CD4-positive, alpha-beta memory T cell (primary cell): ENCODE measurements at regions of chr12 and their contacts with region 1.

Region 1: GRCh38 chr12:132828706-132829534 is at the start of gene GOLGA3:
- DNase-seq: peak; percentile 93 to 96 (median 95)
- H3K4me3 ChIP-seq: peak within 1 kb of the TSS; percentile 58 to 91
- H3K4me3 Mint-ChIP-seq: peak within 1 kb of the TSS; percentile 91 to 99 (median 96)
- H3K27ac ChIP-seq: peak within 1 kb of the TSS; percentile 98
- H3K27ac Mint-ChIP-seq: peak within 1 kb of the TSS; percentile 99 to 100 (median 100)
- H3K4me1 ChIP-seq: peaks cover 30% of the 10 kb centered on the region
- H3K4me1 Mint-ChIP-seq: peaks cover 22 to 63% (median 43%) of the 10 kb centered on the region in 4 donors
- H3K27me3 ChIP-seq: no peaks in the 10 kb centered on the region
- H3K27me3 Mint-ChIP-seq: no peaks in the 10 kb centered on the region
- total RNA-seq, gene GOLGA3: 64.1 to 67.6 TPM

Region 2: GRCh38 chr12:132710422-132711168 is 118.3 kb before region 1 on chr12 and contains the start of gene PGAM5:
- CTCF ChIA-PET with region 1: no interaction called
- POLR2A ChIA-PET with region 1: interaction called, 7 read pairs
- intact Hi-C with region 1: loop called (anchors 2 kb)
- DNase-seq: peak; percentile 95 to 97 (median 96)
- H3K4me3 ChIP-seq: peak within 1 kb of the TSS; percentile 48 to 70
- H3K4me3 Mint-ChIP-seq: peak within 1 kb of the TSS; percentile 88 to 90 (median 90)
- H3K27ac ChIP-seq: peak within 1 kb of the TSS; percentile 91
- H3K27ac Mint-ChIP-seq: peak within 1 kb of the TSS; percentile 92 to 95 (median 94)
- H3K4me1 ChIP-seq: peaks cover 28% of the 10 kb centered on the region
- H3K4me1 Mint-ChIP-seq: peaks cover 8 to 33% (median 19%) of the 10 kb centered on the region in 4 donors
- H3K27me3 ChIP-seq: no peaks in the 10 kb centered on the region
- H3K27me3 Mint-ChIP-seq: no peaks in the 10 kb centered on the region
- total RNA-seq, gene PGAM5: 23.8 to 28.1 TPM

Region 3: DNA sequence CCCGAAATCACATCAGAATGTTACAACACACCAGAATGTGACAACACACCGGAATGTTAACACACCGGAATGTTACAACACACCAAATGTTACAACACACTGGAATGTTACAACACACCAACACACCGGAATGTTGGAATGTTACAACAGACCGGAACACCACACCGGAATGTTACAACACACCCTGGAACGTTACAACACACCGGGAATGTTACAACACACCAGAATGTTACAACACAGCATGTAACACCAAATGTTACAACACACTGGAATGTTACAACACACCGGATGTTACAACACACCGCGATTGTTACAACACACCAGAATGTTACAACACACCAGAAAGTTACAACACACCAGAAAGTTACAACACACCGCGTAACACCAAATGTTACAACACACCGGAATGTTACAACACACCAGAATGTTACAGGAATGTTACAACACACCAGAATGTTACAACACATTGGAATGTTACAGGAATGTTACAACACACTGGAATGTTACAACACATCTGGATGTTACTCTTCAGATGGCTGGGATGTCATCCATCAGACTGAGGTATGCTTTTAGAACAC is 37.4 kb after region 1 on chr12:
- CTCF ChIA-PET with region 1: no interaction called
- POLR2A ChIA-PET with region 1: interaction called, 3 read pairs
- intact Hi-C with region 1: loop called (anchors 5 kb)
- DNase-seq: no peak
- H3K4me3 ChIP-seq: no peak overlapping the region
- H3K4me3 Mint-ChIP-seq: no peak overlapping the region
- H3K27ac ChIP-seq: no peak overlapping the region
- H3K27ac Mint-ChIP-seq: peak overlapping the region in 3 of 7 donors; percentile 22 to 90 (median 72)
- H3K4me1 ChIP-seq: peaks cover 15% of the 10 kb centered on the region
- H3K4me1 Mint-ChIP-seq: peaks cover 12 to 20% (median 15%) of the 10 kb centered on the region in 4 donors
- H3K27me3 ChIP-seq: no peaks in the 10 kb centered on the region
- H3K27me3 Mint-ChIP-seq: no peaks in the 10 kb centered on the region

Region 4: DNA sequence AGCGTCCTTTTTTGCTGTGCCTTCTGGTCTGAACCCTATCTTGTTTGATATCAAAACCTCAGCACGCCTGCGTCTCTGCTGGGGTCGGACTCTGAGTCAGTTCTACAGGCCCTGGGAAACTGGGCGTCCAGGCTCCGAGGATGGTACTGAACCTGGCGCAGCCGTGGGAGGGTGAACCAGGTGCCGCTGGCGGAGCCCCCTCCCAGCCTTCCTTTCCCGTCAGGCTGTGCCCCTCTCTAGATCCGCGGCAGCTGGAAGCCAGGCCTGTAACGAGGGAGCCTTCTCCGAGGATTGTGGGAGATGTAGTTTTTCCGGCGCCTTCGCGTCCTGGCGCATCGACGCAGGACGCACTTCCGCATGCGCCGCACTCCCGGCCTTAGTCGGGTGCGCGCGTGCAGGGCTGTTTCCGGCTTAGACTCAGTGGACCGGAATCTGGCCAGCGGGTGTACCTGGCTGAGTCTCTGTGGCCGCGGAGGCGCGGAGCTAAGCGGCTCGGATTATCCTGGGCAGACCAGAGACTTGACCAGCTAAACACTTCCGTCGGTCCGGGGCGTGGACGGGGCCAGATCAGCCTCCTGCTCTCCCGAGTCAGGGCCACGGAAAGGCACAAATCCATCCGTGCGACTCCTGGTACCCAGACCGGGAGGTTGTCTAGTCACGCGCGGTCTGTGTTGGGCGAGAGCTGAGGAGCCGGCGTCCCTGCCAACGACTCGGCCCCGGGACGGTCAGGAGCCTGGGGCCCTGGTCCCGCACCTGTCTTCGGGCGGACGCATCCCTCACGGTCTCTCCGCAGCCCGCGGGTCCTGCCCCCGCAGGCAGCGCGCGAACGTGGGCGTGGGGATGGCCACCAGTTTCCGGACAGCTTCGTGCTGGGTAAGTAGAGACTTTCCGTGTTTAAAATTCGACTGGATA is 157.3 kb after region 1 on chr12 and contains the start of gene ZNF26:
- CTCF ChIA-PET with region 1: no interaction called
- POLR2A ChIA-PET with region 1: interaction called, 12 read pairs
- intact Hi-C with region 1: no loop called
- DNase-seq: peak; percentile 85 to 90 (median 86)
- H3K4me3 ChIP-seq: peak within 1 kb of the TSS; percentile 58 to 64
- H3K4me3 Mint-ChIP-seq: peak within 1 kb of the TSS; percentile 92 to 98 (median 95)
- H3K27ac ChIP-seq: peak within 1 kb of the TSS; percentile 77
- H3K27ac Mint-ChIP-seq: peak within 1 kb of the TSS; percentile 95 to 97 (median 97)
- H3K4me1 ChIP-seq: peaks cover 22% of the 10 kb centered on the region
- H3K4me1 Mint-ChIP-seq: peaks cover 24 to 48% (median 33%) of the 10 kb centered on the region in 4 donors
- H3K27me3 ChIP-seq: no peaks in the 10 kb centered on the region
- H3K27me3 Mint-ChIP-seq: peaks cover 0 to 3% of the 10 kb centered on the region in 2 donors
- total RNA-seq, gene ZNF26: 25.9 to 28.2 TPM

Region 5: GRCh38 chr12:133080368-133081158 is 251.6 kb after region 1 on chr12 and contains the start of gene ZNF140:
- CTCF ChIA-PET with region 1: no interaction called
- POLR2A ChIA-PET with region 1: interaction called, 3 read pairs
- intact Hi-C with region 1: loop called (anchors 1 kb)
- DNase-seq: peak; percentile 95 to 98 (median 97)
- H3K4me3 ChIP-seq: peak within 1 kb of the TSS; percentile 59 to 76
- H3K4me3 Mint-ChIP-seq: peak within 1 kb of the TSS in 1 of 8 donors; percentile 17
- H3K27ac ChIP-seq: peak within 1 kb of the TSS; percentile 100
- H3K27ac Mint-ChIP-seq: no peak within 1 kb of the TSS
- H3K4me1 ChIP-seq: peaks cover 13% of the 10 kb centered on the region
- H3K4me1 Mint-ChIP-seq: peaks cover 0 to 10% (median 5%) of the 10 kb centered on the region in 4 donors
- H3K27me3 ChIP-seq: no peaks in the 10 kb centered on the region
- H3K27me3 Mint-ChIP-seq: no peaks in the 10 kb centered on the region
- total RNA-seq, gene ZNF140: 25.2 to 28.2 TPM